ENCODE measurements at regions of chr7 and their contacts with region 1.

Region 1: GRCh38 chr7:147245292-147245691 is 1128.7 kb downstream of the CNTNAP2 start:
- DNase-seq: peak; percentile 70
- H3K4me3 Mint-ChIP-seq: no peak overlapping the region
- H3K27ac Mint-ChIP-seq: no peak overlapping the region
- H3K4me1 Mint-ChIP-seq: no peaks in the 10 kb centered on the region
- H3K27me3 Mint-ChIP-seq: no peaks in the 10 kb centered on the region

Region 2: GRCh38 chr7:147053746-147054145 is 191.5 kb before region 1 on chr7:
- intact Hi-C with region 1: no loop called
- DNase-seq: no peak
- H3K4me3 Mint-ChIP-seq: no peak overlapping the region
- H3K27ac Mint-ChIP-seq: no peak overlapping the region
- H3K4me1 Mint-ChIP-seq: no peaks in the 10 kb centered on the region
- H3K27me3 Mint-ChIP-seq: no peaks in the 10 kb centered on the region

Region 3: DNA sequence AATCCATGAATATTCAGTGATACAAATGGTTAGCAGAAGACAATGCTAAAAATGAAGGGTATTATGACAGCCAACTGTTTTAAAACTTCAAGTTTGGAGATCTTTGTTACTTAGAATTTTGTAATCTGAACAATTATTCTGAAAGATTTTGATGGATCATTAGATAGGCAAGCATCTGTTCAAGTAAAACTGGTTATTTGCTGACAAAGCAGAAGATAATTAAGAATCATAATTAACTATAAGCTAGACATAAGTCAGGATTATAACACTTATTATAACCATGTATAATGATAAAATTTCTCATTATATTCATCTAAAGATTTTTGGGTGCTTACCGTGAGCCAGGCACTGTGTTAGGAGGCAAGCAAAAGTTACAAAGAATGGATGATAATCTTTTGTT is 16.4 kb after region 1 on chr7:
- intact Hi-C with region 1: no loop called
- DNase-seq: no peak
- H3K4me3 Mint-ChIP-seq: no peak overlapping the region
- H3K27ac Mint-ChIP-seq: no peak overlapping the region
- H3K4me1 Mint-ChIP-seq: no peaks in the 10 kb centered on the region
- H3K27me3 Mint-ChIP-seq: no peaks in the 10 kb centered on the region

Region 4: GRCh38 chr7:148084138-148084537 is 838.8 kb after region 1 on chr7:
- intact Hi-C with region 1: loop called (anchors 10 kb)
- DNase-seq: peak; percentile 59
- H3K4me3 Mint-ChIP-seq: no peak overlapping the region
- H3K27ac Mint-ChIP-seq: no peak overlapping the region
- H3K4me1 Mint-ChIP-seq: no peaks in the 10 kb centered on the region
- H3K27me3 Mint-ChIP-seq: peaks cover 5% of the 10 kb centered on the region